GM12878 (cell line): ENCODE measurements at regions of chr10 and their contacts with region 1.

Region 1: GRCh38 chr10:67697724-67698131 is 1.7 kb upstream of the CTNNA3 start:
- DNase-seq: no peak
- ATAC-seq: peak; percentile 92
- H3K4me3 ChIP-seq: no peak overlapping the region
- H3K27ac ChIP-seq: no peak overlapping the region
- H3K4me1 ChIP-seq: 0 out of 2 replicates have a peak, but pooled peaks cover 3% of the 10 kb centered on the region
- H3K27me3 ChIP-seq: no peaks in the 10 kb centered on the region; a peak in 1 of 4 replicates
- CTCF ChIP-seq: peak; percentile 59 to 75 (median 65)
- EP300 ChIP-seq: no peak
- POLR2A ChIP-seq: no peak
- RAD21 ChIP-seq: peak; percentile 80

Region 2: GRCh38 chr10:67520924-67521520 is 176.7 kb before region 1 on chr10:
- CTCF ChIA-PET with region 1: interaction called, 17 read pairs
- POLR2A ChIA-PET with region 1: no interaction called
- RAD21 ChIA-PET with region 1: interaction called, 30 read pairs
- SMC1A ChIA-PET with region 1: interaction called, 18 read pairs
- in situ Hi-C with region 1: no loop called
- intact Hi-C with region 1: no loop called
- DNase-seq: peak; percentile 2
- ATAC-seq: peak; percentile 97
- H3K4me3 ChIP-seq: no peak overlapping the region
- H3K27ac ChIP-seq: no peak overlapping the region
- H3K4me1 ChIP-seq: no peaks in the 10 kb centered on the region
- H3K27me3 ChIP-seq: no peaks in the 10 kb centered on the region
- CTCF ChIP-seq: peak; percentile 65 to 85 (median 74)
- EP300 ChIP-seq: no peak
- POLR2A ChIP-seq: no peak
- RAD21 ChIP-seq: peak; percentile 89

Region 3: DNA sequence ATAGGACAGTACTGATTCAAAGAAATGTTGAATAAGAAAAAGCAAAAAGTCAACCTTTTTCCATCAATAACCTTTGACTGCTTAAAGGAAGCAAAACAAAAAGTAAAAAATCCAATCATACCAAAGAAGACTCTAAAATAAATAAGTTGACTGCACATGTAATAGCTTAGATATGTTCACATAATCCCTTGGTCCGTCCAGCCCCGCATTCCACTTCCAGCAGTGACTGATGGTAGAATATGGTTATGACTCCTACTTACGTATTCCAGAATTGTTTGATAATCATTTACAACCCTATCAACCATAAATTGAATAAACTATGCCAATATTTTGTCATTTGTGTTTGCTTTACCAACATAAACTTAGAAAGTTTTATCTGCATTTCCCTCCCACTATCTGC is 79.6 kb before region 1 on chr10:
- CTCF ChIA-PET with region 1: interaction called, 9 read pairs
- POLR2A ChIA-PET with region 1: no interaction called
- RAD21 ChIA-PET with region 1: interaction called, 7 read pairs
- SMC1A ChIA-PET with region 1: interaction called, 10 read pairs
- in situ Hi-C with region 1: no loop called
- intact Hi-C with region 1: no loop called
- DNase-seq: no peak
- ATAC-seq: no peak
- H3K4me3 ChIP-seq: no peak overlapping the region
- H3K27ac ChIP-seq: no peak overlapping the region
- H3K4me1 ChIP-seq: no peaks in the 10 kb centered on the region; the same call in 1 of the 2 replicates
- H3K27me3 ChIP-seq: no peaks in the 10 kb centered on the region
- CTCF ChIP-seq: no peak
- EP300 ChIP-seq: no peak
- POLR2A ChIP-seq: no peak
- RAD21 ChIP-seq: no peak

Region 4: GRCh38 chr10:67666416-67667034 is 31.2 kb before region 1 on chr10:
- CTCF ChIA-PET with region 1: interaction called, 153 read pairs
- POLR2A ChIA-PET with region 1: interaction called, 7 read pairs
- RAD21 ChIA-PET with region 1: interaction called, 100 read pairs
- SMC1A ChIA-PET with region 1: interaction called, 122 read pairs
- in situ Hi-C with region 1: no loop called
- intact Hi-C with region 1: no loop called
- DNase-seq: no peak
- ATAC-seq: peak; percentile 63
- H3K4me3 ChIP-seq: no peak overlapping the region
- H3K27ac ChIP-seq: no peak overlapping the region
- H3K4me1 ChIP-seq: no peaks in the 10 kb centered on the region
- H3K27me3 ChIP-seq: no peaks in the 10 kb centered on the region
- CTCF ChIP-seq: peak; percentile 12 to 53 (median 25); a peak in 3 of 6 replicates
- EP300 ChIP-seq: no peak
- POLR2A ChIP-seq: no peak
- RAD21 ChIP-seq: peak; percentile 59

Region 5: DNA sequence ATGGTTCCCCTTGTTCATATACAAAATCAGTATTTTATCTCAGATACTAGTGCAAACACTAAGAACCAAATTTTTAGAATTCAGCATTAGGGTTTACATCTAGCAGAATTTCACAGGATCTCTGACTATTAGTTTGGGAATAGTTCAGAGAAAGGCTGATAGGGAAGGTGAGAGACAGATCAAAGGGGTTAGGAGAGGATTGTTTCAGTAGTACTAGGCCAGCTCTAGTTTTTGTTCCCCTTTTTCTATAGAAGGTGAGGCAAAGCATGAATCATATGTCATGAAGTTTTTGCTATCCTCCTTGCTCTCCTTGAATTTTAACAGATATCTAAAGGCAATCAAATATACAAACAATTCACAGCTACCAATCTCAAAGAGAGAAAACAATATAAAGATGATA is 24.4 kb after region 1 on chr10:
- CTCF ChIA-PET with region 1: interaction called, 32 read pairs
- POLR2A ChIA-PET with region 1: no interaction called
- RAD21 ChIA-PET with region 1: interaction called, 10 read pairs
- SMC1A ChIA-PET with region 1: interaction called, 8 read pairs
- in situ Hi-C with region 1: no loop called
- intact Hi-C with region 1: no loop called
- DNase-seq: no peak
- ATAC-seq: peak; percentile 93
- H3K4me3 ChIP-seq: no peak overlapping the region
- H3K27ac ChIP-seq: no peak overlapping the region
- H3K4me1 ChIP-seq: peaks cover 3% of the 10 kb centered on the region; the same call in 1 of the 2 replicates
- H3K27me3 ChIP-seq: no peaks in the 10 kb centered on the region
- CTCF ChIP-seq: no peak
- EP300 ChIP-seq: no peak
- POLR2A ChIP-seq: no peak
- RAD21 ChIP-seq: no peak

Region 6: DNA sequence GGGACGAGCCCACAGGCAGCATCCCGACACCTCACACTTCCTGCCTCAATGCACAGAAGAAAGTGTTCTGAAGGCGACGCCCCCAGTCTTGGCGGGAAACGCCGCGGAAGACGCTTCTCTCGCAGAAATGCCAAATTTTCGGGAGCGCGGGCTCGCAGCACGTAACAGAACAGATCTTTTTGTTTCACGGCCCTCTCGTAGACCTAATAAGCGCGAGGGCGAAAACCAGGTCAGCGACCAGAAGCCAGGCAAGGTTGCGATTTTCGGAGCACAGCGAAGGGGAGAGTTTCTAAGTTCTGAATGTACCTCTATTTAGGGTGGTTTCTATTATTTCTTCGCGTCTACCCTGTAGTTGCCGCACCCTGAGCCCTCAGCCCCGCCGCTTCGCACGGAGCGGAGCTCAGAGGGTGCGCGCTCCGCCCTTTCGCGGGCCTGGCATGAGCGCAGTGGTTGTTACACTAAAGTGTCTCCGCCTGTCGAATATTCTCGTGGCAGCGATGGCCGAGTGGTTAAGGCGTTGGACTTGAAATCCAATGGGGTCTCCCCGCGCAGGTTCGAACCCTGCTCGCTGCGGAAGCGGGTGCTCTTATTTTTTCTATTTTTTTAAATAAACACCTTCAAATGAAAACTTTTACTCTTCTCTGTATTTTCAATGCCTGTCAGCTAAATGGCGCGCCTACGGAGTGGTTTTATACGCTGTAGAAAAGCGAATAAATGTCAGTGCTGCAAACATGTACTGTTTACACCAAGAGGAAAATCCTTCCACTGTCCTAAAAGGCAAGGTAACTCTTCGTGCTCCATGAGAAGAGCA is 66.5 kb after region 1 on chr10:
- CTCF ChIA-PET with region 1: interaction called, 17 read pairs
- POLR2A ChIA-PET with region 1: interaction called, 9 read pairs
- RAD21 ChIA-PET with region 1: interaction called, 80 read pairs
- SMC1A ChIA-PET with region 1: interaction called, 448 read pairs
- in situ Hi-C with region 1: no loop called
- intact Hi-C with region 1: no loop called
- DNase-seq: peak; percentile 94
- ATAC-seq: peak; percentile 88
- H3K4me3 ChIP-seq: peak overlapping the region; percentile 86
- H3K27ac ChIP-seq: peak overlapping the region; percentile 94
- H3K4me1 ChIP-seq: no peaks in the 10 kb centered on the region
- H3K27me3 ChIP-seq: no peaks in the 10 kb centered on the region
- CTCF ChIP-seq: no peak
- EP300 ChIP-seq: peak; percentile 3 to 89; a peak in 1 of 4 replicates
- POLR2A ChIP-seq: peak; percentile 64
- RAD21 ChIP-seq: no peak

Region 7: GRCh38 chr10:67779465-67780203 is 81.9 kb after region 1 on chr10:
- CTCF ChIA-PET with region 1: interaction called, 573 read pairs
- POLR2A ChIA-PET with region 1: interaction called, 17 read pairs
- RAD21 ChIA-PET with region 1: interaction called, 292 read pairs
- SMC1A ChIA-PET with region 1: interaction called, 448 read pairs
- in situ Hi-C with region 1: loop called (anchors 5 kb)
- intact Hi-C with region 1: loop called (anchors 1 kb)
- DNase-seq: no peak
- ATAC-seq: peak; percentile 77
- H3K4me3 ChIP-seq: no peak overlapping the region
- H3K27ac ChIP-seq: no peak overlapping the region
- H3K4me1 ChIP-seq: peaks cover 38% of the 10 kb centered on the region
- H3K27me3 ChIP-seq: no peaks in the 10 kb centered on the region
- CTCF ChIP-seq: peak; percentile 65 to 88 (median 72); a peak in 5 of 6 replicates
- EP300 ChIP-seq: no peak
- POLR2A ChIP-seq: no peak
- RAD21 ChIP-seq: peak; percentile 96